ENCODE measurements at regions of chr10 and their contacts with region 1.

Region 1: DNA sequence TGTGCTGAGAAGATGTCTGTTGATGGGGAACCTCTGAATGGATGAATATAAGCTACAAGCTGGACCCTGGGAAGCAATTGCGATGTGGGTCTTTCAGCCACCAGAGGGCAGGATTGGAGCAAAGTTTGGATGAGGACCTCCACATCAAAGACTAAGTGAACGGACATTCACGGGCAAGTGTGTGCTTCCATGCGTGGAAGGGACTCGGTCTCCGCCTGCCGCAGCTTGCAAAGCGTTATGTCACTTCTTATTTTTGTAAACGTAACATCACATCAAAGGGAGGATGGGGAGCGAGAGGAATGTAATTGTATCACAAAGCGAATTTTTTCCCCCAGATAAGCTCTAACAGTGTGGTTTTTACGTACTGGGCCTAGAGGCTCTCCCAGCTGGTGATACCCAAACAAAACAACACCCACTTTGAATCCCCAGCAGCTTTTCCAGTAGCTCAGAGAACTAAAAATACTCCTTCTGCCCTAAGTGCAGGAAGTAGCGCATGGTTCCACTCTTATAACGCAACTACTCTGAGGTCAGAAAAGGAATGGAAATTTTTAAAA is 65.0 kb downstream of the VWA2 start:
- DNase-seq: peak; percentile 91
- H3K4me3 ChIP-seq: peak overlapping the region in 1 of 3 experiments; percentile 12
- H3K27ac ChIP-seq: no peak overlapping the region
- H3K4me1 ChIP-seq: peaks cover 8% of the 10 kb centered on the region
- H3K27me3 ChIP-seq: peaks cover 2 to 10% of the 10 kb centered on the region in 2 experiments
- CTCF ChIP-seq: peak; percentile 77 to 87
- POLR2A ChIP-seq: no peak

Region 2: GRCh38 chr10:114285961-114286441 is 18.1 kb before region 1 on chr10:
- CTCF ChIA-PET with region 1: interaction called, 11 read pairs
- POLR2A ChIA-PET with region 1: no interaction called
- dilution Hi-C with region 1: no loop called
- intact Hi-C with region 1: no loop called
- DNase-seq: no peak
- H3K4me3 ChIP-seq: no peak overlapping the region
- H3K27ac ChIP-seq: no peak overlapping the region
- H3K4me1 ChIP-seq: no peaks in the 10 kb centered on the region
- H3K27me3 ChIP-seq: peaks cover 0 to 9% of the 10 kb centered on the region in 2 experiments
- CTCF ChIP-seq: no peak
- POLR2A ChIP-seq: no peak

Region 3: DNA sequence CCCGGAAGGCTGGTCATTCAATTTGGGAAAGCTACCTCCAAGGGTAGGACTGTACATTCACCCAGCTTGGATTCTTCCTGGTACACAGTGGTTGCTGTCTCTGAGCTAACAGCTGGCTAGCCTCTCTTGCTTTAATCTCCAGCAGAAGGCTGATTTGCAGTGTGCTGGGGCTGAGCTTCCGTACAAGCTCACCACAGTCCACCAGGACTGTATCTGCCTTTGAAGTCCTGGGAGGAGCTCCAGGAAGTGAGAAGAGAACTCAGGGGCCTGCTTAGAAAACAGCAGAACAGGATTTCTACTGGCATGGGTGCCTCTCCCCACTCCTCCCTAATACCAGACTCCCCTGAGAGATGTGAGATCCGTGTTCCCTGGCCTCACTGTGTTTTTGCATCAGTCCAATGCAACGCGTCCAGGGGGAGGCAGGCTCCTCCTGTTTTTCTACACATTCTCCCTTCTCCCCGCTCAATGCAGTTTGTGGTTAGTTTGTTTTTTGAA is 93.6 kb after region 1 on chr10:
- CTCF ChIA-PET with region 1: interaction called, 16 read pairs
- POLR2A ChIA-PET with region 1: no interaction called
- dilution Hi-C with region 1: no loop called
- intact Hi-C with region 1: no loop called
- DNase-seq: no peak
- H3K4me3 ChIP-seq: no peak overlapping the region
- H3K27ac ChIP-seq: no peak overlapping the region
- H3K4me1 ChIP-seq: peaks cover 9% of the 10 kb centered on the region
- H3K27me3 ChIP-seq: peaks cover 84 to 88% of the 10 kb centered on the region in 2 experiments
- CTCF ChIP-seq: no peak
- POLR2A ChIP-seq: no peak

Region 4: DNA sequence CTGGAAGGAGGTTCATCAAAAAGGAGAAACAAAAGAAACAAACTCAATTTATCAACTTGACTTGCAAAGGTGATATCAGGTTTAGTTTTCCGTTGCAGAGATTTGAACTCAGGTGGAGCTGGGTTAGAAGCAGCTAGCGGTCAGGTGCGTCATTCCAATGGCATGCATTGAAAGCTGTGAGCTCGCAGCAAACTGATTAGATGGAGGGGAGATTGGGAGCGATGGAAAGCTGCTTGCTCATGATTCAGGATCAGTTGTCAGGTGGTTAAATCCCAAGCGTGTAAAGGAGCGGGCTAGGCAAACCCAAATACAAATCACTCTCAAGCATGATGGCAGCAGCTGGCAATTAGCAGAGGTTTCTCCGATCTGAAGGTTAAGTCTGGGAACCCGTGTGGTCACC is 149.5 kb after region 1 on chr10:
- CTCF ChIA-PET with region 1: interaction called, 124 read pairs
- POLR2A ChIA-PET with region 1: no interaction called
- dilution Hi-C with region 1: no loop called
- intact Hi-C with region 1: no loop called
- DNase-seq: no peak
- H3K4me3 ChIP-seq: no peak overlapping the region
- H3K27ac ChIP-seq: no peak overlapping the region
- H3K4me1 ChIP-seq: no peaks in the 10 kb centered on the region
- H3K27me3 ChIP-seq: no peaks in the 10 kb centered on the region
- CTCF ChIP-seq: no peak
- POLR2A ChIP-seq: no peak

Region 5: DNA sequence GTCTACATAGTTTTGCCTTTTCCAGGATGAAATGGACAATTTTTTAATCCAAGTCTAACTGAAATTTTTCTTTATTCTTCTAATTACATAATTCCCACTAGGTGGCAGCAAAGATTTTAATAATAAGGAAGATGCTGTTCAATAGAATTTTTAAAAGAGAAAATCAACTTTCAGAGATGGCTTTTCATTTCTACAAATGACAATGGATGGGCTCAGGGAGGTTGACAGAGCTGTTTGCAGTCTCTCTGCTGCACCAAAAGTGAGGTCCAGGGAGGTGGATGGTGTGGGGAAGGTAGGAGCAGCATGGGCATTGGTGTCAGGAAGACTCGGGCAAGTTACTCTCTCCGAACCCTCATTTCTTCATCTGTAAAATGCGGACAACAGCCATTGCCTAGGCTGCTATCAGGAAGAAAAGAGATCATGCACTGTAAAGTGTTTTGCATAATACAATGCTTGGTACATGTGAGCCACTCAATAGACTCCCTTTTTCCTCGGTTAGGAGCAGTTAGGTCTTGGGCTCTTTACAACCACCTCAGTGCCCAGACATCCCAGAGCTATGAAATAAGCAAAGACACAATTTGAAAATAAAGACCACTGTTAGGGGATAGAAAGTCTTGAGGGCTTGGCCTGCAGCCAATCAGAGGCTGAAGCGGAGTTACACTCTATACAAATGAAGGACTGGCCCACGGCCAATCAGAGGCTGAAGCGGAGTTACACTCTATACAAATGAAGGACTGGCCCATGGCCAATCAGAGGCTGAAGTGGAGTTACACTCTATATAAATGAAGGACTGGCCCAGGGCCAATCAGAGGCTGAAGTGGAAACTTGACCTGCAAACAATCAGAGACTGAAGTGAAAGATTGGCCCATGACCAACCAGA is 246.9 kb after region 1 on chr10:
- CTCF ChIA-PET with region 1: interaction called, 105 read pairs
- POLR2A ChIA-PET with region 1: no interaction called
- dilution Hi-C with region 1: no loop called
- intact Hi-C with region 1: loop called (anchors 1 kb)
- DNase-seq: peak; percentile 93
- H3K4me3 ChIP-seq: no peak overlapping the region
- H3K27ac ChIP-seq: no peak overlapping the region
- H3K4me1 ChIP-seq: peaks cover 11% of the 10 kb centered on the region
- H3K27me3 ChIP-seq: no peaks in the 10 kb centered on the region
- CTCF ChIP-seq: peak in 1 of 2 donors; percentile 15
- POLR2A ChIP-seq: no peak

Region 6: DNA sequence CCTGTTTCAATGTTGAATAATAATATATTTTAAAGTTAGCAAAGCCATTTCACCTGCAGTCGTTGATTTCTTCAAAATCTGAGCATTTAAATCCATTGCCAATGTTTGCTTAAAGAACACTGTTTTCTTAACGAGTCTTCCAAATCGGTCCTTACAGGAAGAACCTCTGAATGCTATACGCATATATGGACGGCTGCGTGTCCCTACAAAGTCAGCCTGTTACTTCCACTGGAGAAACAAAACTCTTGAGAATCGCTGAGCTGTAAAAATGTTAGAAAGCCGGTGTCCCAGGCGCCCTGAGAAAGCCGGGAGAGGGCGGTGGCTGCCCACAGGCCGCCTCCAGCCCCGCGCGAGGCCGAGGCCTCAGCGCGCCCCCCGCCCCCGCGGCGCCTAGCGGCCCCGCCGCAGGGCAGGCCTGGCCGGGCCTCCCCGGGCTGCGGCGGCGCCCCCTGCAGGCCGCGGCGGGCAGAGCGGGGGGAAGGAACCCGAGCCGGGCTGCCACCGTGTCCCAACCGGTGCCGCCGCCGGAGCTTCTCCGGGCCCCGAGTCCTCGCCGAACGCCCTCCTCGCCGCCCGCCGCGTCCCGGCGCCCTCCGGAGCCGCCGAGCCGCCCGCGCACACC is 517.3 kb after region 1 on chr10 and contains the start of gene FHIP2A:
- CTCF ChIA-PET with region 1: interaction called, 15 read pairs
- POLR2A ChIA-PET with region 1: no interaction called
- dilution Hi-C with region 1: no loop called
- intact Hi-C with region 1: loop called (anchors 1 kb)
- DNase-seq: peak; percentile 74
- H3K4me3 ChIP-seq: peak within 1 kb of the TSS; percentile 78 to 96 (median 86)
- H3K27ac ChIP-seq: peak within 1 kb of the TSS; percentile 97
- H3K4me1 ChIP-seq: peaks cover 35% of the 10 kb centered on the region
- H3K27me3 ChIP-seq: no peaks in the 10 kb centered on the region
- CTCF ChIP-seq: peak; percentile 53 to 60
- POLR2A ChIP-seq: peak; percentile 61
- total RNA-seq, gene FHIP2A: 34.8 and 39.6 TPM in 2 replicates